T-cell (primary cell): ENCODE measurements at regions of chr4 and their contacts with region 1.

Region 1: DNA sequence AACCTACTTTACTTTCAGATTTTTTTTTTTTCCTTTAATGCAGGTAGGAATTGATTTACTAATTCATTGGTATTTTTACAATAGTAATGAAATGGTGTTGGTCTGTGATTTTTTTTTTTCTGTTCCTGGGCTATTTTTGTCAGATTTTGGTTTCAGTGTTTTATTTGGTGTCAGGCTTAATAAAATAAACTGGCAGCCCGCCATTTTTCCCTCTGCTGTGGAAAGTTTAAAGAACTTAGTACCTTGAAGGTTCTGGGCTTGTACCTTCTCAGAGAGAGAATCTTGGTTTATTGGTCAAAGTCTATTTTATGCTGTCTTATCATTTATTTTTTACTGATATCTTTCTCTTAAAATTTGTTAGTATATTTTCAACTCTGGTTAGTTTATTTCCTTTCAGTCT is 64.0 kb upstream of the RHOH start:
- DNase-seq: no peak
- ATAC-seq: no peak
- H3K4me3 ChIP-seq: no peak overlapping the region
- H3K4me3 Mint-ChIP-seq: no peak overlapping the region
- H3K27ac ChIP-seq: no peak overlapping the region
- H3K27ac Mint-ChIP-seq: no peak overlapping the region
- H3K4me1 ChIP-seq: peaks cover 0 to 2% of the 10 kb centered on the region in 2 experiments
- H3K4me1 Mint-ChIP-seq: peaks cover 0 to 7% (median 5%) of the 10 kb centered on the region in 3 donors
- H3K27me3 ChIP-seq: no peaks in the 10 kb centered on the region
- H3K27me3 Mint-ChIP-seq: no peaks in the 10 kb centered on the region

Region 2: DNA sequence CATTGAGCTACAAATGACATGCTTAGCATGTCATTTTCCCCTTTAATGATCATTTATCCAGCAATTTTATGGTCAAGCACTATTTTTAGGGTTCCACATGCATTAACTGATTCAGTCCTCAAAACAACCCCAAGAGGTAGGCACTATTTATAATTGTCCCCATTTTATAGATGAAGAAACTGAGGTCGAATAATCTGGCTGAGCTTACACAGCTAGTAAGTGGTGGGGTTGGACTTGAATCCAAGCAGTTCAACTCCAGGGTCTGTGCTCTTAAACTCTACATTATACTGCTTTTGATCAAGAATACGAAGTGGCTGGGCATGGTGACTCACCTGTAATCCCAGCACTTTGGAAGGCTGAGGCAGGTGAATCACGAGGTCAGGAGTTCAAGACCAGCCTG is 199.1 kb after region 1 on chr4:
- CTCF ChIA-PET with region 1: no interaction called
- POLR2A ChIA-PET with region 1: interaction called in 1 of 2 experiments, 16 read pairs
- DNase-seq: no peak
- ATAC-seq: no peak
- H3K4me3 ChIP-seq: no peak overlapping the region
- H3K4me3 Mint-ChIP-seq: no peak overlapping the region
- H3K27ac ChIP-seq: no peak overlapping the region
- H3K27ac Mint-ChIP-seq: no peak overlapping the region
- H3K4me1 ChIP-seq: no peaks in the 10 kb centered on the region
- H3K4me1 Mint-ChIP-seq: peaks cover 0 to 8% (median 0%) of the 10 kb centered on the region in 3 donors
- H3K27me3 ChIP-seq: peaks cover 0 to 7% of the 10 kb centered on the region in 2 experiments
- H3K27me3 Mint-ChIP-seq: peaks cover 0 to 4% of the 10 kb centered on the region in 2 donors